PC-9 (cell line): ENCODE measurements at regions of chr5 and their contacts with region 1.

Region 1: DNA sequence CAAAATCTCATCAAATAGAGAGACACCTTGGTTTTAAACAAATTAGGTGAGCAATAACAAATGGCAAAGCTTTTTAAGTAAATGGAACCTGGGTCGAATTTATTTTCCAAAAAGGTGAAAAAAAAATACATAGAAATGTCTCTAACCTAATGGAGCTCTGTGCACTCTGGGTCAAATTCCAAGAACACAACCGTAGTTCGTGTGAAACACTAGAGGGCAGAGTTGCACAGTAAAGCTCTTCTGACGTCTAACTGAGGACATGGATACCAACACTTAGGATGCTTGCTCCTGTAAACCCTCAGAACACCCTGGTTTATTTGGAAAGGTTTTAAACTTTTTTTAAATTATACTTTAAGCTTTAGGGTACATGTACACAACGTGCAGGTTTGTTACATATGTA is 18.9 kb downstream of the MARCHF11 start:
- DNase-seq: peak; percentile 35 to 51
- H3K4me3 ChIP-seq: no peak overlapping the region
- H3K27ac ChIP-seq: no peak overlapping the region
- H3K4me1 ChIP-seq: no peaks in the 10 kb centered on the region
- H3K27me3 ChIP-seq: no peaks in the 10 kb centered on the region
- CTCF ChIP-seq: peak; percentile 80

Region 2: GRCh38 chr5:16456103-16456832 is 295.6 kb after region 1 on chr5:
- CTCF ChIA-PET with region 1: interaction called, 23 read pairs
- POLR2A ChIA-PET with region 1: no interaction called
- intact Hi-C with region 1: loop called (anchors 1 kb)
- DNase-seq: peak; percentile 38 to 49
- H3K4me3 ChIP-seq: no peak overlapping the region
- H3K27ac ChIP-seq: no peak overlapping the region
- H3K4me1 ChIP-seq: no peaks in the 10 kb centered on the region
- H3K27me3 ChIP-seq: no peaks in the 10 kb centered on the region
- CTCF ChIP-seq: peak; percentile 95

Region 3: DNA sequence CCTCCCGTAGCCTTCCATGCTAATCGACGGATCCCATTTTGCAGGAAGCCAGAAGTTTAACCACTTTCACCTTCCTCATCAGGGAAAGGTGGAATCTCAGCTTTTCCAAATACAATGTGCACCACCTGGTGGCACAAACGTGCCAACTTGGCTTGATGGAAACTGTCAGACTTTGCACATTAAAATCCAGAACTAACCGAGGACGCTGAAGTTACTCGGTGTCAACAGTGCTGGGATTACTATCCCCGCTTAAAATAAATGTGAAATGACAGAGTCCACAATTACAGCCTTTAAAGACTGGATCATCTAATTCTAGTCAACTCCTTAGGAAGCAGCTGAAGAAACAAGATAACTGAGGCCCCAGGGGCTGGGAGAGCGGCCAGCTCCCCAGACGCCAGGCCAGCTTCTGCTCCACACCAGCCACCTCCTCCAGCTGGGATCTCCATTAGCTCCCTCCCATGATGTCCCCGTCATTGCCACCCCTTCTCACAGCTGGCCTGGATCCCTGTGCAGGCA is 506.2 kb after region 1 on chr5:
- CTCF ChIA-PET with region 1: no interaction called
- POLR2A ChIA-PET with region 1: no interaction called
- intact Hi-C with region 1: loop called (anchors 2 kb)
- DNase-seq: peak in 1 of 2 experiments; percentile 41
- H3K4me3 ChIP-seq: no peak overlapping the region
- H3K27ac ChIP-seq: no peak overlapping the region
- H3K4me1 ChIP-seq: no peaks in the 10 kb centered on the region
- H3K27me3 ChIP-seq: no peaks in the 10 kb centered on the region
- CTCF ChIP-seq: peak; percentile 62